Mammary epithelial cell (primary cell): ENCODE measurements at regions of chr17 and their contacts with region 1.

Region 1: GRCh38 chr17:56960596-56961538 is at the start of gene COIL:
- DNase-seq: peak; percentile 86
- H3K4me3 ChIP-seq: peak within 1 kb of the TSS; percentile 66 to 98 (median 91)
- H3K27ac ChIP-seq: peak within 1 kb of the TSS; percentile 93
- H3K4me1 ChIP-seq: no peaks in the 10 kb centered on the region
- H3K27me3 ChIP-seq: no peaks in the 10 kb centered on the region
- CTCF ChIP-seq: peak; percentile 98 to 99
- total RNA-seq, gene COIL: 11.0 to 14.8 TPM

Region 2: DNA sequence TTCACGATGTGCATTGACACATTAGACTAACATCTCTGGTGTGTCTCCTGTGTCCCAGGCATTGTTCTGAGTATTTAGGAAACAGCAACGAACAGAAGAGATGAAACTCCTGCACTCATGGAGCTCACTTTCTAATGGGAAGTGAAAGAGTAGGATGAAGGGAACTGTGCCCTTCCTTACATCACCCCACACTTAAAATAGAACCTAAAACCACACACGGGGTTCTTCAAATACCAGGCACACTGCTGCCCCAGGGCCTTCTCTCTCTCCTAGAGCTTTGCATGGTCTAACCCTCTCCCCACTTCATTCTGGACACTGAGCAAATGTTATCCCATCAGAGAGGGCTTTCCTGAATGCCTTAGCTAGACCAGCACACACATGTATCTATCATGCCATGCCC is 80.7 kb before region 1 on chr17:
- CTCF ChIA-PET with region 1: no interaction called
- dilution Hi-C with region 1: no loop called
- in situ Hi-C with region 1: no loop called
- intact Hi-C with region 1: no loop called
- DNase-seq: no peak
- H3K4me3 ChIP-seq: no peak overlapping the region
- H3K27ac ChIP-seq: no peak overlapping the region
- H3K4me1 ChIP-seq: no peaks in the 10 kb centered on the region
- H3K27me3 ChIP-seq: no peaks in the 10 kb centered on the region
- CTCF ChIP-seq: no peak

Region 3: DNA sequence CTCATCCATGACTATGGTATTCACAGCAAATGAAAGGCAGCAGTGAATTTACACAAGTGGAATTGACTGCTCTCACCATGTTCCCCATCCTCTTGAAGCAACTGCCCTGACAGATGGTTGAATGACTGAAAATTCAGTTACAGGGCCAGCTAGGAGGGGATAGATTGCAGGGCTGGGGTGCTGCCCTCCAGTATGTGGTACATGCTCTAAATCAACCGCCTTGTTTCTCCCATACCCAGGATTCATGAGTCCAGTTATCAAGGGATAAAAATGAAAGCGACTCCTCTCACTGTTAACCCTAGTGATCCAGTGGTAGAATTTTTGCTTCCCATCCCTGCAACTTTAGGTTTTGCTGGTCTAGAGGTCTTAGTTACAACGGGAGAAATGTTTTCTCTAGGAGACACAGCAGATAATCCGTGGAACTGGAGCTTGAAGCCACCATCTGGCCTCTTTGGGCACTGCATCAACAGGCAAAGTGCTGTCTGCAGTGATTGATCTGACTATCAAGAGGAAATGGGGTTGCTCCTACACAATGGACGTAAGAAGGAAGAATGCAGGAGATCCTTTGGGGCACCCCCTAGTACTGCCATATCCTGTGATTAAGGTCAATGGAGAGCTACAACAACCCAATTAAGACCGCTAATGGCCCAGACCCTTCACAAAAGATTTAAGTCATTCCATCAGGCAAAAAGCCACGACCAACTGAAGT is 49.0 kb after region 1 on chr17:
- CTCF ChIA-PET with region 1: no interaction called
- dilution Hi-C with region 1: no loop called
- in situ Hi-C with region 1: no loop called
- intact Hi-C with region 1: loop called (anchors 2 kb)
- DNase-seq: peak; percentile 30
- H3K4me3 ChIP-seq: no peak overlapping the region
- H3K27ac ChIP-seq: no peak overlapping the region
- H3K4me1 ChIP-seq: no peaks in the 10 kb centered on the region
- H3K27me3 ChIP-seq: no peaks in the 10 kb centered on the region
- CTCF ChIP-seq: peak; percentile 89 to 91

Region 4: DNA sequence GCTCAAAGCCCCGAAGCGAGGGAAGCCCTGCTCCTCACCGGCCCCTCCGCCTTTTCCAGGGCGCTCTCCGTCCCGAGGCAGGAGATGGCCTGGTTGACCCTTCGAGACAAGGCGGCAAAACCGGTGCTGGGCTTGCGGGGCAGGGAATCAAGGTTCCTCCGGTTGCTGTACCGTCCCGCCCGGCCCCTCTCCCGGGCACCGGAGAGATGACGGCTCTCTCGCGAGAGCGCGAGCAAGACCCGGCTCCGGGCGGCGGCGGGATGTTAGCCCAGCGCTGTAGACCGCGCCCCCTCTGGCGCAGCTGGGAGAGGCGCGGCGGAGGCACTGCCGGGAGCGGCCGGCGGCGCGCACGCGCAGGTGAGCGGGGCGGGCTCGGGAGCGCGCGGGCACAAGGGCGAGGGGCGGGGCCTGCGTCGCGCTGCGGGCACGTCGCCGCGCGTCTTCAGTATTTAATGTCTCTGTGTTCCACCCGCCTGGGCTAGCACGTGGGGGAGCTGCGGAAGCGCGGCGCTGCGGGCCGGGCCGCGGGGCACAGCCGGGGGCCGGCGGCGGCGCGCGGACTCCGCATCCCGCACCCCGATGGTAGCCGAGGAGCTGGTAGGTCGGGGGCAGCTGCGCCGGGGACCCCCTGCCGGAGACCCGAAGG is 124.1 kb after region 1 on chr17 and contains the start of gene AKAP1:
- CTCF ChIA-PET with region 1: no interaction called
- dilution Hi-C with region 1: no loop called
- in situ Hi-C with region 1: no loop called
- intact Hi-C with region 1: loop called (anchors 2 kb)
- DNase-seq: peak; percentile 94
- H3K4me3 ChIP-seq: peak within 1 kb of the TSS; percentile 96 to 98 (median 98)
- H3K27ac ChIP-seq: peak within 1 kb of the TSS; percentile 91
- H3K4me1 ChIP-seq: peaks cover 21% of the 10 kb centered on the region
- H3K27me3 ChIP-seq: no peaks in the 10 kb centered on the region
- CTCF ChIP-seq: peak in 1 of 2 donors; percentile 26
- total RNA-seq, gene AKAP1: 31.3 to 33.7 TPM